Naive thymus-derived CD8-positive, alpha-beta T cell (primary cell): ENCODE measurements at regions of chr14 and their contacts with region 1.

Region 1: GRCh38 chr14:50060871-50061663 is 55.3 kb downstream of the VCPKMT start:
- DNase-seq: peak in 2 of 10 donors; percentile 17 to 21
- ATAC-seq: no peak
- H3K4me3 Mint-ChIP-seq: peak overlapping the region; percentile 74 to 95 (median 90)
- H3K27ac Mint-ChIP-seq: peak overlapping the region; percentile 97 to 100 (median 98)
- H3K4me1 Mint-ChIP-seq: peaks cover 43 to 91% (median 83%) of the 10 kb centered on the region in 4 donors
- H3K27me3 Mint-ChIP-seq: no peaks in the 10 kb centered on the region

Region 2: GRCh38 chr14:49852301-49853157 is 208.5 kb before region 1 on chr14 and contains the start of gene NEMF:
- POLR2A ChIA-PET with region 1: interaction called, 23 read pairs
- DNase-seq: peak; percentile 57 to 89 (median 78)
- ATAC-seq: peak; percentile 80 to 84
- H3K4me3 Mint-ChIP-seq: peak within 1 kb of the TSS; percentile 91 to 100 (median 96)
- H3K27ac Mint-ChIP-seq: peak within 1 kb of the TSS; percentile 93 to 99 (median 96)
- H3K4me1 Mint-ChIP-seq: peaks cover 20 to 48% (median 46%) of the 10 kb centered on the region in 4 donors
- H3K27me3 Mint-ChIP-seq: no peaks in the 10 kb centered on the region
- polyA plus RNA-seq, gene NEMF: 39.6 to 46.1 (median 43.5) TPM

Region 3: DNA sequence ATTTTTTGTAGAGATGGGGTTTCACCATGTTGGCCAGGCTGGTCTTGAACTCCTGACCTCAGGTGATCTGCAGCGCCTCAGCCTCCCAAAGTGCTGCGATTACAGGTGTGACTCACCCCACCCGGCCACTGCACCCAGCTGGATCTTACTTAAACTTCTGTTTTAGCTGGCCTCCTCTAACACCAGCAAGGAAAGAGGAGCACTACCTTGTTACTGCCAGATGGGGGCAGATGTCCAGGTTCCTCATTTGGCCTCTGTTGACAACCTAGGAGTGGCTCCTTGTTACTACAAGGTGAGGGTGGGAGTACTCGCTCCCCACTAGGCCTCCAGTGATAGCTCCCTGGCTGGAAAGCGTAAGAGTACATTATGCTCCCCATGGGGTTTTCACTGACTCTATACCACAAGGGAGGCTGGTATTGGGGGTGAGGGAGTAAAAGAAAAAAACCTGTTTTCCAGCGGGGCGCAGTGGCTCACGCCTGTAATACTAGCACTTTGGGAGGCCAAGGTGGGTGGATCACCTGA is 181.3 kb before region 1 on chr14:
- POLR2A ChIA-PET with region 1: interaction called, 11 read pairs
- DNase-seq: peak in 8 of 10 donors; percentile 18 to 77 (median 50)
- ATAC-seq: peak; percentile 87 to 94
- H3K4me3 Mint-ChIP-seq: no peak overlapping the region
- H3K27ac Mint-ChIP-seq: peak overlapping the region in 7 of 10 donors; percentile 35 to 81 (median 51)
- H3K4me1 Mint-ChIP-seq: peaks cover 0 to 18% (median 13%) of the 10 kb centered on the region in 4 donors
- H3K27me3 Mint-ChIP-seq: no peaks in the 10 kb centered on the region

Region 4: GRCh38 chr14:49946320-49947141 is 114.5 kb before region 1 on chr14:
- POLR2A ChIA-PET with region 1: interaction called, 12 read pairs
- DNase-seq: peak in 6 of 10 donors; percentile 9 to 64 (median 26)
- ATAC-seq: peak; percentile 75 to 76
- H3K4me3 Mint-ChIP-seq: peak overlapping the region; percentile 6 to 82 (median 70)
- H3K27ac Mint-ChIP-seq: peak overlapping the region; percentile 87 to 99 (median 92)
- H3K4me1 Mint-ChIP-seq: peaks cover 42 to 77% (median 70%) of the 10 kb centered on the region in 4 donors
- H3K27me3 Mint-ChIP-seq: no peaks in the 10 kb centered on the region

Region 5: GRCh38 chr14:49977126-49977841 is 83.8 kb before region 1 on chr14:
- POLR2A ChIA-PET with region 1: interaction called, 53 read pairs
- DNase-seq: peak in 6 of 10 donors; percentile 22 to 77 (median 51)
- ATAC-seq: peak; percentile 83 to 94
- H3K4me3 Mint-ChIP-seq: peak overlapping the region; percentile 55 to 85 (median 76)
- H3K27ac Mint-ChIP-seq: peak overlapping the region; percentile 90 to 98 (median 95)
- H3K4me1 Mint-ChIP-seq: peaks cover 48 to 95% (median 81%) of the 10 kb centered on the region in 4 donors
- H3K27me3 Mint-ChIP-seq: no peaks in the 10 kb centered on the region

Region 6: DNA sequence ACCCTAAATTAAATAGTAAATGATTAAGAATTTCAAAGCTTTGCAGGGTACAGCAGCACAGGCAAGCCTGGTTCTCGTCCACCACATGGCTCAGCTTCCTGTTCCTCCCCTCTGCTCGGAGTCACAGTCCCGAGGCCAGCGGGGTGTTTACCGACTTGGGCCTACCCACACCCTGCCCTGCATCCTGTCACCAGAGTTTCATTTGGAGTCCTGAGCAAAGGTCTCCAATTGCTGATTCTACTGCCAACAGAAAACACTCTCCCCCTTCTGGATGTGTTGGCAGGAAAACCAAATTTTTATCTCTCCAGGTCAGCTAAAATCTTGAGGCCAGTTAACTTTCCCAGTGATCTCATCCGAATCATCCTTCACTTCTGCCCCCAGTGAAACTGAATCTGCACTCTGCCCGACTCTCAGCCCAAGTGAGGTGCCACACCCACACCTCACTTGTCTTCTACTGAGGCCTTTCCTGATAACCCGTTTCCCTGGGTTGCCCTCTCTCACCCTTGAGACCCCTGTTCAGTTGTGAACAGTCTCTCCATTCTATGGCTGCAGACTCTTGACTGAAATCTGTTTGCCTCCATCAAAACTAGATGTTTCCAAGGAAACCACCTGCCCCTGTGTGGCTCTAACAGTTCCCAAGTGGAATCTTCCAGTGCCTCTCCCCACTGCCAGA is 15.9 kb before region 1 on chr14:
- POLR2A ChIA-PET with region 1: interaction called, 86 read pairs
- DNase-seq: peak in 9 of 10 donors; percentile 23 to 83 (median 62)
- ATAC-seq: peak; percentile 71 to 82
- H3K4me3 Mint-ChIP-seq: peak overlapping the region; percentile 6 to 87 (median 64)
- H3K27ac Mint-ChIP-seq: peak overlapping the region; percentile 85 to 98 (median 92)
- H3K4me1 Mint-ChIP-seq: peaks cover 49 to 76% (median 76%) of the 10 kb centered on the region in 4 donors
- H3K27me3 Mint-ChIP-seq: no peaks in the 10 kb centered on the region

Region 7: GRCh38 chr14:50091240-50091913 is 30.3 kb after region 1 on chr14:
- POLR2A ChIA-PET with region 1: interaction called, 75 read pairs
- DNase-seq: no peak
- ATAC-seq: peak; percentile 9 to 12
- H3K4me3 Mint-ChIP-seq: peak overlapping the region in 8 of 10 donors; percentile 34 to 70 (median 54)
- H3K27ac Mint-ChIP-seq: peak overlapping the region; percentile 73 to 94 (median 91)
- H3K4me1 Mint-ChIP-seq: peaks cover 48 to 90% (median 87%) of the 10 kb centered on the region in 4 donors
- H3K27me3 Mint-ChIP-seq: no peaks in the 10 kb centered on the region

Region 8: GRCh38 chr14:50156111-50156510 is 95.0 kb after region 1 on chr14:
- POLR2A ChIA-PET with region 1: no interaction called
- DNase-seq: no peak
- ATAC-seq: no peak
- H3K4me3 Mint-ChIP-seq: no peak overlapping the region
- H3K27ac Mint-ChIP-seq: no peak overlapping the region
- H3K4me1 Mint-ChIP-seq: no peaks in the 10 kb centered on the region
- H3K27me3 Mint-ChIP-seq: no peaks in the 10 kb centered on the region